ENCODE measurements at regions of chr6 and their contacts with region 1.

Region 1: GRCh38 chr6:42879372-42880239 is at the start of gene RPL7L1:
- DNase-seq: peak; percentile 71 to 92 (median 88)
- H3K4me3 ChIP-seq: peak within 1 kb of the TSS; percentile 94
- H3K4me3 Mint-ChIP-seq: peak within 1 kb of the TSS; percentile 91 to 99 (median 99)
- H3K27ac ChIP-seq: peak within 1 kb of the TSS; percentile 96
- H3K27ac Mint-ChIP-seq: peak within 1 kb of the TSS; percentile 89 to 100 (median 99)
- H3K4me1 ChIP-seq: peaks cover 12% of the 10 kb centered on the region
- H3K4me1 Mint-ChIP-seq: peaks cover 24 to 33% (median 33%) of the 10 kb centered on the region in 3 donors
- H3K27me3 ChIP-seq: no peaks in the 10 kb centered on the region
- H3K27me3 Mint-ChIP-seq: no peaks in the 10 kb centered on the region
- total RNA-seq, gene RPL7L1: 199 to 200 TPM

Region 2: DNA sequence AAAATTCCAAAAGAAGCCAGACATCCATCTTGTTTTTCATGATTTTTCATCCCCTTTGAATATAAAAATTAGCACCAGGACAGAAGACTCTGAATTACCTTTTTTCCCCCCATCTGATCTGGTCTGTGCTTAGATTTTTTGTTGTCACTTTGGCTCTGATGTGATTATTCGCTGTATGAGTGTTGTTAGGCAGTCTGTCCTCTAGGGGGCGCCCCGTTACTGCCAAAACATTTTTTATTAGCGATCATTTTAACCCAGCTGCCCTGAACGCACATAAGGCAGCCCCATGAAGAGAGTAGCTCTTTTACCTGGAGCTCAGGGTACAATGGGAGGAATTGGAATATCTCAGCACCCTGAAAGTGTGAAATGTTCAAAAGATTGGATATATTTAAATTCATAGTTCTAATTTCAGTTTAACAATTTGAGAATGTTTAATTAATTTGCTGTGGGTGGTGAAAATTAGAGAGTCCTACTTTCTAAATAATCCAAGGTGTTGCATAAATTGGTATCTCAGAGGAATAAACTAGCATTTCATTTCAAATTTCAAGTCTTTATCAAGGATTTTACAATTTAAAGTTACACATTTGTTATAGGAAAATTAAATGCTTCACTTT is 218.0 kb before region 1 on chr6:
- CTCF ChIA-PET with region 1: interaction called, 43 read pairs
- POLR2A ChIA-PET with region 1: interaction called, 7 read pairs
- DNase-seq: peak; percentile 75 to 88 (median 77)
- H3K4me3 ChIP-seq: no peak overlapping the region
- H3K4me3 Mint-ChIP-seq: no peak overlapping the region
- H3K27ac ChIP-seq: no peak overlapping the region
- H3K27ac Mint-ChIP-seq: peak overlapping the region in 5 of 8 donors; percentile 0 to 84 (median 17)
- H3K4me1 ChIP-seq: no peaks in the 10 kb centered on the region
- H3K4me1 Mint-ChIP-seq: peaks cover 0 to 5% (median 0%) of the 10 kb centered on the region in 3 donors
- H3K27me3 ChIP-seq: no peaks in the 10 kb centered on the region
- H3K27me3 Mint-ChIP-seq: no peaks in the 10 kb centered on the region

Region 3: DNA sequence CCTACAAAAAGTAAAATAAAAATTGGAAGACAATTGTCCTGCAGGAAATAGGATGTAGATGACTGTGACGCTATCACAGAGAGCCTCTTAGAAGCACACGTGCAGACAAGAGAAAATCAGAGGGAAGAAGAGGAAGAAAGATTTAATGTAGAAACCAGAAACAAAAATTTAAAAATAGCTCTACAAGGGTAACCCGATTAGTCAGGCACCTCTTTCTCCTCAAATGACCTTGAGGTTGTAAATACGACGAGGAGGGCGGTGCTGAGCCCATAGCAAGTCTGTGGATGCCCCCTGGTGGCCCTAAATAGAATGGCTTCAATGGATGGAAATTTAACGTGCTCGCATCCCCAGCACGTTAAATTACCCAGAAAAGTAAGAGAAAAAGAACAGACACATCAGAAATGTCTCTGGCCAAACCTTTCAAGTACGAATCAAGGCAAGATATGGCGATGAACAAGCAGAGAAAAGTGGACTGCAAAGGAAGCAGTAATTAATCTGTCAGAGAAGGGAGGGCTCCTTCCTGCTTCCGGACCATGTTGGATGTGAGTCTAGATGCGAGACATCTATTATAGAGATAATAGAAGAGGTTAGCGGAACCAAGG is 153.0 kb before region 1 on chr6:
- CTCF ChIA-PET with region 1: interaction called, 10 read pairs
- POLR2A ChIA-PET with region 1: interaction called, 16 read pairs
- DNase-seq: peak; percentile 51 to 85 (median 75)
- H3K4me3 ChIP-seq: peak overlapping the region; percentile 68
- H3K4me3 Mint-ChIP-seq: peak overlapping the region; percentile 86 to 91 (median 89)
- H3K27ac ChIP-seq: peak overlapping the region; percentile 34
- H3K27ac Mint-ChIP-seq: peak overlapping the region; percentile 63 to 98 (median 94)
- H3K4me1 ChIP-seq: peaks cover 15% of the 10 kb centered on the region
- H3K4me1 Mint-ChIP-seq: peaks cover 19 to 23% (median 20%) of the 10 kb centered on the region in 3 donors
- H3K27me3 ChIP-seq: no peaks in the 10 kb centered on the region
- H3K27me3 Mint-ChIP-seq: peaks cover 0 to 3% of the 10 kb centered on the region in 2 donors

Region 4: DNA sequence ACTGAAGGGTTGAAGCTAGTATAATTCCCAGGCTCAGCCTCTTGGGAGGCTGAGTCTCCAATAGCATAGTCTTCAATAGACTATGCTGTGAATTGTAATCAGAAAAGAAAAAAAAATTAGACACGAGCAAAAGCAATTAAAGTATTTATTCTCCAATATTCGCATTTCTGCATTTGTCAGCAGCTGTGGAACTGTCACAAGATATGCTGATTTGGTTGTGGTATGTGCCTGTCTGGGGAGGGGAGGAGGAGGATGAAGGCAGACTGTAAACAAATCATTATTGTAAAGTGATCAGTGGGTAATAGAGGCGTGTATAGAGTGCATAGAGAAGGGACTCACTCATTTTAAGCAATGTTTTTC is 107.9 kb before region 1 on chr6:
- CTCF ChIA-PET with region 1: interaction called, 4 read pairs
- POLR2A ChIA-PET with region 1: interaction called, 18 read pairs
- DNase-seq: peak in 2 of 5 donors; percentile 20 to 72
- H3K4me3 ChIP-seq: peak overlapping the region; percentile 35
- H3K4me3 Mint-ChIP-seq: peak overlapping the region; percentile 74 to 88 (median 81)
- H3K27ac ChIP-seq: peak overlapping the region; percentile 67
- H3K27ac Mint-ChIP-seq: peak overlapping the region; percentile 96 to 100 (median 99)
- H3K4me1 ChIP-seq: peaks cover 66% of the 10 kb centered on the region
- H3K4me1 Mint-ChIP-seq: peaks cover 67 to 85% (median 82%) of the 10 kb centered on the region in 3 donors
- H3K27me3 ChIP-seq: no peaks in the 10 kb centered on the region
- H3K27me3 Mint-ChIP-seq: no peaks in the 10 kb centered on the region

Region 5: DNA sequence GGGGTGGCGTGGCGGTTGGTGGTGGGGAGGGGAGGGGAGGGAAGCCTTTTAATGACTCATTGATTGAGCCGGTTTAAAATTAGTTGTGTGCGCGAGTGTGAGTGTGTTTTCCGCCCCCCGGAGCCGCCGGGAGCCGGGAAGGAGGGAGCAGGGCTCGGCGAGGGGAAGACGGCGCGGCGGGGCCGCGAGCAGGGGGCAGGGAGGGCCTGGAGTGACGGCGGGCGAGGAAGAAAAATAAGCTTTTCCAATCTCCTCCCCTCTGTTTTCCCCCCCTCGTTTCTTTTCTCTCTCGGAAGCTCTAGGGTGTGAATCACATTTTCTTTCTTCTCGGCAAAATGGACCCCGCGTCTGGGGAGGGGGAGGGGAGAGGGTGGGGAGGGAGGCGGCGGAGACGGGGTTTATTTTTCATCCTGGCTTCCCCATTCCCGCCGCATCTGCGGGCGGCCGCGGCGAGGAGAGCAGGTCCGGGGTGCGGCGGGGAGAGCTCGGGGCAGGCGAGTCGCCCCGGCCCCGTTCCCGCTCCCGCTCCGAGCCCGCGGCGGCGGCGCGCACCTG is 96.9 kb before region 1 on chr6:
- CTCF ChIA-PET with region 1: interaction called, 6 read pairs
- POLR2A ChIA-PET with region 1: interaction called, 40 read pairs
- DNase-seq: peak; percentile 65 to 89 (median 79)
- H3K4me3 ChIP-seq: peak overlapping the region; percentile 95
- H3K4me3 Mint-ChIP-seq: peak overlapping the region; percentile 93 to 100 (median 98)
- H3K27ac ChIP-seq: peak overlapping the region; percentile 99
- H3K27ac Mint-ChIP-seq: peak overlapping the region in 7 of 8 donors; percentile 98 to 100 (median 100)
- H3K4me1 ChIP-seq: peaks cover 64% of the 10 kb centered on the region
- H3K4me1 Mint-ChIP-seq: peaks cover 34 to 35% (median 34%) of the 10 kb centered on the region in 3 donors
- H3K27me3 ChIP-seq: no peaks in the 10 kb centered on the region
- H3K27me3 Mint-ChIP-seq: peaks cover 0 to 13% of the 10 kb centered on the region in 2 donors

Region 6: GRCh38 chr6:42890311-42891198 is 10.9 kb after region 1 on chr6:
- CTCF ChIA-PET with region 1: interaction called, 11 read pairs
- POLR2A ChIA-PET with region 1: interaction called, 28 read pairs
- DNase-seq: peak; percentile 80 to 91 (median 85)
- H3K4me3 ChIP-seq: peak overlapping the region; percentile 99
- H3K4me3 Mint-ChIP-seq: peak overlapping the region; percentile 94 to 100 (median 99)
- H3K27ac ChIP-seq: peak overlapping the region; percentile 85
- H3K27ac Mint-ChIP-seq: peak overlapping the region; percentile 81 to 98 (median 96)
- H3K4me1 ChIP-seq: peaks cover 16% of the 10 kb centered on the region
- H3K4me1 Mint-ChIP-seq: peaks cover 13 to 23% (median 20%) of the 10 kb centered on the region in 3 donors
- H3K27me3 ChIP-seq: no peaks in the 10 kb centered on the region
- H3K27me3 Mint-ChIP-seq: no peaks in the 10 kb centered on the region